Endothelial cell of umbilical vein (primary cell): ENCODE measurements at regions of chr7 and their contacts with region 1.

Region 1: DNA sequence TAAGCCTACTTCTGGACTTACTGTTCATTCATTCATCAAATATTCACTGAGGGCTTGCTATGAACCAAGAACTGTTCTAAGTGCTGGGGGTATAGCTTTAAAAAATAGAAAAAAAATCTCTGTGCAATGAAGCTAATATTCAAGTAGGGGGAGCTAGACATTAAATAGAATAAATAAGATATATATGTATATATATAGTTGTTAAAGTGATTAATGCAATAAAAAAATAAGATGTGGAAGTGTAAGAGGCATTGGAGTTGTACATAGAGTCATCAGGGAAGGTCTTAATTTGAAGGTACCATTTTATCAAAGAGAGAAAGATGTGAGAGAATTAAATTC is 181.2 kb upstream of the AGR3 start:
- DNase-seq: no peak
- H3K4me3 ChIP-seq: no peak overlapping the region
- H3K27ac ChIP-seq: no peak overlapping the region
- H3K4me1 ChIP-seq: peaks cover 16% of the 10 kb centered on the region
- H3K27me3 ChIP-seq: no peaks in the 10 kb centered on the region
- CTCF ChIP-seq: no peak
- POLR2A ChIP-seq: no peak

Region 2: DNA sequence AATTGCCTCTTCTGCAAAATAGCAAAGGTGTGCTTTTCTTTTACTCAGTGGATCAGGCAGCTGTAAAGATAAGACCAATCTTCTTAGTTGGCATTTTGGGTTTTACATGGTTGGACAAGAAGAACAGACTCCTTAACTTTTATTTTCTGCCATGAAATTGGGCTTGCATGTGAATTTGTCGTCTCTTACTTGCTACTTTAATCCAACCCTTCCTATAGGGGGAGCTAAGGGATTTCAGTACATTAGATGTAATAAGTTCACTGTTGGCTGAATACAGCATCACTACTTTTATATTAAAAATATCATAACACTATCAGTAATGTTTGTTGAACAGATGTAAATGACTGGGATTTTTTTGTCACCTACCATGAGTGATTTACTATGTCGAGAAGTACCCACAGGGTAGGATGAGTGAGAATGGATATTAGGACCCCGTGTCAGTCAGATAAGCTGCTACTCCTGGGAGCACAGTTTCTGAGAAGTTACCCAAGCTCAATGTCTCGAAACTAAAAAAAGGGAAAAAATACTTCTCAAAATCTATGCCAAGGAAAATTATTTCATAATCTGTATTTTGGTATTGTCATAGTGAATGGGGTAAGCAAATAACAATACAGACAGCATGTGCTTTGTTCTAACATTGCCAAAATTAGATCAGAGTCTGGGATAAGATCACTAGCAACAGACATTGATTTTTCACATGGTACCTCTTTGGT is 53.9 kb before region 1 on chr7:
- CTCF ChIA-PET with region 1: interaction called, 33 read pairs
- POLR2A ChIA-PET with region 1: no interaction called
- dilution Hi-C with region 1: no loop called
- intact Hi-C with region 1: no loop called
- DNase-seq: peak; percentile 43
- H3K4me3 ChIP-seq: no peak overlapping the region
- H3K27ac ChIP-seq: no peak overlapping the region
- H3K4me1 ChIP-seq: peaks cover 3% of the 10 kb centered on the region
- H3K27me3 ChIP-seq: no peaks in the 10 kb centered on the region
- CTCF ChIP-seq: peak in 1 of 2 donors; percentile 21
- POLR2A ChIP-seq: no peak

Region 3: GRCh38 chr7:17046666-17047065 is 16.3 kb before region 1 on chr7:
- CTCF ChIA-PET with region 1: interaction called, 10 read pairs
- POLR2A ChIA-PET with region 1: no interaction called
- dilution Hi-C with region 1: no loop called
- intact Hi-C with region 1: loop called (anchors 1 kb)
- DNase-seq: no peak
- H3K4me3 ChIP-seq: no peak overlapping the region
- H3K27ac ChIP-seq: no peak overlapping the region
- H3K4me1 ChIP-seq: peaks cover 28% of the 10 kb centered on the region
- H3K27me3 ChIP-seq: no peaks in the 10 kb centered on the region
- CTCF ChIP-seq: no peak
- POLR2A ChIP-seq: no peak

Region 4: DNA sequence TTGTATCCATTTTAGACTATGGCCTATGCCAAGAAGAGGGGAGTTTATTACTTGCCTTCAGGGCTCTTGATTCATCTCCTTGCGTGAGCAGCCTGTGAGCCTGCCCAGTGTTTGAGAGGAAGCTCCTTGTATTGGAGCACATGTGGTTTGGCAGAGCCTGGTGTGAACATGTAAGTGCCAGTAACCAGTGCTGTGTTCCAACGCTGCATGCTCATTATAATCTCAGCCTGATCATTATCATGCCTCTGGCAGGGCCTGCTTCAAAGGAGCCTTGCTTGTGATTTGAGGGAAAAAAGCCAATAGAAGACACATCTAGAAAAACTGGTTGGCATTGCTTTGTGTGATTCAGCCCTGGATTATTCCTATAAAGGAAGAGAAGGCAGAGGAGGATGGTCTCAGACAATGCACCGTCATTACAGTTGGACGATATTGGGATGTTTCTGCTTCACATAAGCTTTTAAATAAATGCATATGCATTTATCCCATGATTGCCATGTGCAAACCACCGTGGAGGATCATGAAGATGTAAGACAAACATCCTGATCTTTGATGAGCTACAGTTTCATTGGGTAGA is 32.1 kb after region 1 on chr7:
- CTCF ChIA-PET with region 1: interaction called, 10 read pairs
- POLR2A ChIA-PET with region 1: no interaction called
- dilution Hi-C with region 1: no loop called
- intact Hi-C with region 1: no loop called
- DNase-seq: no peak
- H3K4me3 ChIP-seq: no peak overlapping the region
- H3K27ac ChIP-seq: no peak overlapping the region
- H3K4me1 ChIP-seq: no peaks in the 10 kb centered on the region
- H3K27me3 ChIP-seq: no peaks in the 10 kb centered on the region
- CTCF ChIP-seq: no peak
- POLR2A ChIP-seq: no peak

Region 5: DNA sequence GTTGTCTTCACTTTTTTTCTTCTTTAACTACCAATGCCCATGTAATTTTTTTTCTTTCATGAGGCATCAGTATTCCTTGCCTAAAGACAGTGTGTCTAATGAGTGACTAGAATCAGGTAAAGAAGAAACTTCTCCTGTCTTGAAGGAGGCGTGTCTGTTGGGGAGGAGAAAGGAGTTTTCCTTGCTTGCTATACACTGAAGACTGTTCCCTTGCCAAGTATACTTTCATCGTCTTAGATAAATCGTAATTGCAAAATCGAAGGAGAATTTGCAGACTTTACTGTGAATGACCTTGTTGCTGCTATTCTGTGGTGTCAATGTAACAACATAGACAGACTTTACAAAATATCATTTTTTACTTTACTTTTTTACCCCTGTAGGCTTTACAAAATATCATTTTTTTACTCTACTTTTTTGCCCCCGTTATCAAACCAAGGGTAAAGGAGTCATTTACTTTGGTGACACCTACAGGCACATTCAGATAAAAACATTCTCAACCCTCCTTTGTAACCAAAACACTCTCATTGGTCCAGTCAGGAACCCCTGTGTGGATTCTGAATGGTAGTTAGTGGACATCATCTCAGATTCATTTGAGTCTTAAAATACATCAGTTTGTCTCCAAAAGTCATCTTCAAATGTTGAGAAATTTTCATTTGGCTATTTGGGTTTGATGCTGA is 467.9 kb after region 1 on chr7:
- CTCF ChIA-PET with region 1: interaction called, 3 read pairs
- POLR2A ChIA-PET with region 1: no interaction called
- dilution Hi-C with region 1: no loop called
- intact Hi-C with region 1: loop called (anchors 5 kb)
- DNase-seq: peak; percentile 60
- H3K4me3 ChIP-seq: no peak overlapping the region
- H3K27ac ChIP-seq: no peak overlapping the region
- H3K4me1 ChIP-seq: peaks cover 4% of the 10 kb centered on the region
- H3K27me3 ChIP-seq: no peaks in the 10 kb centered on the region
- CTCF ChIP-seq: peak in 1 of 2 donors; percentile 16
- POLR2A ChIP-seq: no peak

Region 6: DNA sequence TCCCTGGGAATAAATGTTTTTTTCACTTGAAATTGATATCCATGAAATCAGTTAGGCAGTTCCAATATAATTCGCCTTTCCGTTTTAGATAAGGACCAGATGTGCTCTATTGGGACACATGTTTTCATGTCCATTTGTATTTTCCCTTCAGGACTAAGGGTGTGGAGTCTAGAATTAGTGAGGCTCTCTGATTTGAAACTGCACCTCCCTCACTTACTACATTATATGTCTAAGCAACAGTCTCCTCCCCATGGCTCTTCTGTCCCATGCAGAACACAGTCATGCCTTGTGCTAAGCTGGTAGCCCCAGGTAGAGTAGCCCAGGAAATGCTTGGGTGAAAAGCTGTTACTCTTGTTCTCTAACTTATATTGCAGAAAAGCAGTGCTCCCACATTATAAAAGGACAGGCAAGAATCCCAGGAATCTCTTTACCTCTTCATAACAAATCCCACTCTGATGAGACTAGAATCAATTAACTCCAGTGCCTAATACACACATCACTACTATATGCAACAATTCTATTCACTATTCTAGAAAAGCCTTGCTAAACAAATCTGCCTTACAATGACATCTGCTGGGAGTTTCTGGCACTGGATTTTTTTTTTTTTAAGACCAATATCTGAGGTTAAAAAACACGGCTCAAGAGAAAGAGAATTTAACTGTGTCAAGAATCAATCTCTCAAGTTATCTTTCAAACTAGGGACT is 583.4 kb after region 1 on chr7:
- CTCF ChIA-PET with region 1: interaction called, 13 read pairs
- POLR2A ChIA-PET with region 1: no interaction called
- dilution Hi-C with region 1: no loop called
- intact Hi-C with region 1: no loop called
- DNase-seq: peak; percentile 38
- H3K4me3 ChIP-seq: no peak overlapping the region
- H3K27ac ChIP-seq: no peak overlapping the region
- H3K4me1 ChIP-seq: no peaks in the 10 kb centered on the region
- H3K27me3 ChIP-seq: no peaks in the 10 kb centered on the region
- CTCF ChIP-seq: peak in 1 of 2 donors; percentile 17
- POLR2A ChIP-seq: no peak